ENCODE measurements at regions of chr5 and their contacts with region 1.

Region 1: DNA sequence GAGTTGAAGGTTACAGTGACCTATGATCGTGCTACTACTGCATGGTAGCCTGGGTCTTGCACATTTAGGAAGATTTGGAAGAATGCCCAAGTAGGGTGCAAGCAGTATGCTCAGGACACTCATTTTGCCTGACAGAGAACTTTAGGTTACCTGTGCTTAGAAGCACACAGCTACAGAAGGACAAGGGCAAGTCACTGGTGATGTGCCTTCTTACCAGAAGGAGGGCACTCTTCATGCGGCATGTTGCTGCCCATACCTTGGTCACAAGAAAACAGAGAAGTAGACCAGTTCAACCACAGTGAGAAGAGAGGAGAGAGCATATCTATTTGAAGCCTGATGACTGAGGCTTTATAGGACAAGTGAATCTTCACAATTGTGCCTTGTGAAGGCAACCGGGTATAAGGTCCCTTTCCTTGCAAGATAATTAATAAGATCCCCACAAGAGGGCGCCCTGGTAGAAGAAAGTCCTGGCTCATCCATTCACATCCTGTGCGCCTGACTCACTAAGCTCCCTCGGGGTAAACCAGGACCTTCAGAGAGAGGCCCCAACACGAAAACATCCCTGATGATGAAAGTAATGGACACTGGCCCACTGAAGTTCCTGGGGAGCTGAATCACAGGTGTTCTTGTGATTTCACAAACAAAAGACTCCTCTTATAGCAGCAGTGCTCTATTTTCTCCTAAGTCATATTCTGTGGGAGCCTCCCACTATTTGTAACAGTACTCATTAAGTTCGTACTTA is 38.1 kb upstream of the STARD4 start:
- DNase-seq: peak; percentile 77 to 84
- ATAC-seq: peak; percentile 99
- H3K4me3 ChIP-seq: peak overlapping the region in 1 of 4 donors; percentile 3
- H3K27ac ChIP-seq: peak overlapping the region; percentile 56 to 73 (median 66)
- H3K4me1 ChIP-seq: peaks cover 4 to 5% of the 10 kb centered on the region in 2 donors
- H3K27me3 ChIP-seq: no peaks in the 10 kb centered on the region
- CTCF ChIP-seq: peak; percentile 59 to 80 (median 74)
- POLR2A ChIP-seq: no peak

Region 2: DNA sequence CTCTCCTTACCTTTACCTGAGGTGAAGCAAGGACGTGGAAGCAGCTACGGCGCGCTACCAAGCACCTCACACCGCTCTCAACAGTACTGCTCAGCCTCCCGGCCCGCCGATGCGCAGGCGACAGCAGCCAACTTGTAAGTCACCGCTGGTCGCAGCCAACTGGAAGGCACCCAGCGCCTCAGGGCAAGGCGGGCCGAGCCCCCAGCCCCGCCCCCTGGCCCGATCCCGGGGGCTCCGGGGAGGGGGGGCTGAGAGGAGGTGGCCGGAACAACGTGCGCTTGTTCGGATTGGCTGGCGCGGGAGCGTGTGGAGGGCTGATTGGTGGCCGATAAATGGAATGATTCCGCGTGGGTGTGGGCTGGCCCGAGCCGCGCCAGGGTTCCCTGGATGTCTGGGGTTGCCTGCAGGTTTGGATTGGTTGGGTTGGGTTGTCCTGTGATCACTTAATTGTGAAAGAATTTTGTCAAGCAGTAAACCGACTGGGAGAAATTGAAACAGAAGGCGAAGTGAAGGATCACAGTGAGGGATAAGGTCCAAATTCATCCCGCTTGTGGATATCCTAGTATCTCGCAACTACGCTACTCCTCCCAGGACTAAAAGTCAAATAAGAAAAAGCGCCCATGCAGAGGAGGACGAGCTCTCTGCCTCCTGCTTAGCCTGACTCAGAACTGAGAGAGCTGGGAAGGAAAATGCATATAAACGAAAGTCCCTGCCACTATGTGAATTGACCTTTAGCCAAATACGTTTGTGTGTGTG is 37.9 kb before region 1 on chr5 and contains the start of gene STARD4:
- in situ Hi-C with region 1: no loop called
- intact Hi-C with region 1: loop called (anchors 2 kb)
- DNase-seq: peak; percentile 79 to 86
- ATAC-seq: peak; percentile 89 to 91
- H3K4me3 ChIP-seq: peak within 1 kb of the TSS; percentile 67 to 79 (median 68)
- H3K27ac ChIP-seq: peak within 1 kb of the TSS; percentile 63 to 81 (median 74)
- H3K4me1 ChIP-seq: peaks cover 0 to 5% of the 10 kb centered on the region in 2 donors
- H3K27me3 ChIP-seq: no peaks in the 10 kb centered on the region
- CTCF ChIP-seq: no peak
- POLR2A ChIP-seq: peak; percentile 48 to 76
- total RNA-seq, gene STARD4: 0.49 to 2.7 (median 1.4) TPM

Region 3: DNA sequence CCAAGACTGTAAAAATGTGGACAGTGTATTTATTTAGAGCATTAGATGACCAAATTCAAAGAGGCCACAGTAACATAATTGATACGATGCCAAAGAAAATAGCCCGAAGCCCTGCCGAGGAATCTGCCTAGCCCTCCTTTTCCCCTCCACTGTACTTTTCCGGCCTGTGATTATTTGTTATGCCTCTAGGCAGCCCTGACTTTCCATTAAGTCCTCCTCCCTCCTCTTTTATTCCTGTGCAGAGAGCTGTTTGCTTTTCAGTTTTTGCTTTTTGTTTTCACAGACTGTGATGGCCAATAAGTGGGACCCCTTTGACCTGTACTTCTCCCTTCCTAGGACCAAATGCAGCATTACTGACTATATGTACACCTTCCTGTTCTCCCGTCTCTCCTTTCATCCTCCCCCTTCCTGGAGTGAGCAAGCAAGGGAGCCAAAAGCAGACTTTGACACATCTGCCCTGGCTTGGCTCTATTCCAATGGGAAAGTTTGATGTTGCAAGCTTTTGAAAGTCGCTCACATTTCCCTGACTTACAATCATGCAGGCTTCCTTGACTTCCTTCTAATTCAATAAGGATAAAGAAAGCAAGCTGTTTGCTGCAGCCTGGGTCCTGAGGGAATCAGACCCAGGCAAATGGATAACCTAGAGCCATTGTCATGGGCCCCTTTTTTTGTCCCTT is 130.4 kb after region 1 on chr5:
- in situ Hi-C with region 1: no loop called
- intact Hi-C with region 1: loop called (anchors 10 kb)
- DNase-seq: peak; percentile 65
- ATAC-seq: peak; percentile 95 to 98
- H3K4me3 ChIP-seq: peak overlapping the region in 1 of 4 donors; percentile 10
- H3K27ac ChIP-seq: peak overlapping the region in 3 of 4 donors; percentile 6 to 47 (median 10)
- H3K4me1 ChIP-seq: peaks cover 13 to 16% of the 10 kb centered on the region in 2 donors
- H3K27me3 ChIP-seq: no peaks in the 10 kb centered on the region
- CTCF ChIP-seq: no peak
- POLR2A ChIP-seq: no peak

Region 4: GRCh38 chr5:111735583-111736270 is 185.3 kb after region 1 on chr5:
- in situ Hi-C with region 1: no loop called
- intact Hi-C with region 1: loop called (anchors 5 kb)
- DNase-seq: peak; percentile 70 to 79
- ATAC-seq: peak; percentile 94 to 97
- H3K4me3 ChIP-seq: peak overlapping the region in 1 of 4 donors; percentile 19
- H3K27ac ChIP-seq: peak overlapping the region; percentile 13 to 61 (median 42)
- H3K4me1 ChIP-seq: peaks cover 37 to 52% of the 10 kb centered on the region in 2 donors
- H3K27me3 ChIP-seq: no peaks in the 10 kb centered on the region
- CTCF ChIP-seq: no peak
- POLR2A ChIP-seq: peak in 1 of 2 donors; percentile 12

Region 5: GRCh38 chr5:111757355-111758283 is 207.2 kb after region 1 on chr5:
- in situ Hi-C with region 1: loop called in 2 of 4 experiments (anchors 10 kb)
- intact Hi-C with region 1: loop called (anchors 2 kb)
- DNase-seq: peak; percentile 90 to 95
- ATAC-seq: peak; percentile 72 to 76
- H3K4me3 ChIP-seq: peak overlapping the region; percentile 49 to 75 (median 64)
- H3K27ac ChIP-seq: peak overlapping the region; percentile 74 to 94 (median 90)
- H3K4me1 ChIP-seq: peaks cover 37 to 43% of the 10 kb centered on the region in 2 donors
- H3K27me3 ChIP-seq: no peaks in the 10 kb centered on the region
- CTCF ChIP-seq: peak; percentile 16 to 39 (median 30)
- POLR2A ChIP-seq: peak; percentile 56 to 82

Region 6: GRCh38 chr5:111762895-111763294 is 212.4 kb after region 1 on chr5:
- in situ Hi-C with region 1: loop called in 2 of 4 experiments (anchors 10 kb)
- intact Hi-C with region 1: no loop called
- DNase-seq: no peak
- ATAC-seq: no peak
- H3K4me3 ChIP-seq: no peak overlapping the region
- H3K27ac ChIP-seq: no peak overlapping the region
- H3K4me1 ChIP-seq: peaks cover 0 to 6% of the 10 kb centered on the region in 2 donors
- H3K27me3 ChIP-seq: no peaks in the 10 kb centered on the region
- CTCF ChIP-seq: no peak
- POLR2A ChIP-seq: no peak

Region 7: GRCh38 chr5:111997711-111998110 is 447.3 kb after region 1 on chr5:
- in situ Hi-C with region 1: no loop called
- intact Hi-C with region 1: no loop called
- DNase-seq: peak in 1 of 2 donors; percentile 12
- ATAC-seq: peak; percentile 56 to 62
- H3K4me3 ChIP-seq: no peak overlapping the region
- H3K27ac ChIP-seq: no peak overlapping the region
- H3K4me1 ChIP-seq: no peaks in the 10 kb centered on the region
- H3K27me3 ChIP-seq: no peaks in the 10 kb centered on the region
- CTCF ChIP-seq: no peak
- POLR2A ChIP-seq: no peak

Region 8: DNA sequence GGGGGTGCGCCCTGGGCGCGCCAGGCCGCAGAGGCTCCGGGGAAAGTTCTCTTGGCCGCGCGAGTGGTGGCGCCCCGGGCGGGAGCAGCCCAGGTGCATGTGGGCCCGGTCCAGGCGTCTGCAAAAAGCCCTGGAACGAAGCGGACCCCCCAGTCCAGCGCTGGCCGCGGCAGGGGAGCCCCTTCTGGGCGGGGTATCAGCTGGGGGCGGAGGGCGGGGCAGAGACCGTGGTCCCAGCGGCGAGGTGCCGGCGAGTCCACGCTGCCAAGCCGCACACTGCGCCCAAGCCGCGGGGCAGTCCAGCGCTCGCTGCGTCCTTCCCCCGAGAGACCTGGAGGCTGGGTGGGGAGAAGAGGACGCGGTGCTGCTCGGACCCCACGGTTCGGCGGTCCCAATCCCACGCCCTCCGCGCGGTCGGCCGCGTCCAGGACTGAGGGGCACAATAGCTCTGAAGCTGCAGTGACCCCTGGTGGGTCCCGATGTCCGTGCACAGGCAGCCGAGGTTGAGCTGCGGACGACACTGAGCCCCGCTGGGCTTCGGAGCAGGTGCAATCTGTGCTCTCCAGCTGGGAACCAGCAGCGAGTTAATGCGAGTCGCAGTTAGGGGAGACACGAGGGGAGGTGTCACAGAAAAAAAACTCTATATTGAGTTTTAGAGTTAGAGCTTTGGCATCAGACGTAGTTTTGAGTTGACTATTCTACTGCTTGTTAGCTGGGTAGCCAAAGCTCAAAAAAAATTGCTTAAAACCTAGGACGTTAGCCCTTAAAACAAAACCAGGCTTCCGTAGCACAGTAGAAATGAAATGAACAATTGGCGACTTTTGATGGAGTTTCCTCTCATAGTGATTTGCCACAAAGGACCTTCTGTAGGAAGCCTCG is 869.8 kb after region 1 on chr5:
- in situ Hi-C with region 1: no loop called
- intact Hi-C with region 1: loop called (anchors 2 kb)
- DNase-seq: peak; percentile 59 to 63
- ATAC-seq: peak; percentile 88 to 89
- H3K4me3 ChIP-seq: peak overlapping the region; percentile 72 to 94 (median 74)
- H3K27ac ChIP-seq: peak overlapping the region; percentile 61 to 80 (median 75)
- H3K4me1 ChIP-seq: no peaks in the 10 kb centered on the region
- H3K27me3 ChIP-seq: peaks cover 17 to 32% (median 31%) of the 10 kb centered on the region in 3 donors
- CTCF ChIP-seq: peak; percentile 57 to 92 (median 86)
- POLR2A ChIP-seq: no peak

Measured in gastrocnemius medialis (tissue), 4 donors.